Mammary epithelial cell (primary cell): ENCODE measurements at regions of chr3 and their contacts with region 1.

Region 1: DNA sequence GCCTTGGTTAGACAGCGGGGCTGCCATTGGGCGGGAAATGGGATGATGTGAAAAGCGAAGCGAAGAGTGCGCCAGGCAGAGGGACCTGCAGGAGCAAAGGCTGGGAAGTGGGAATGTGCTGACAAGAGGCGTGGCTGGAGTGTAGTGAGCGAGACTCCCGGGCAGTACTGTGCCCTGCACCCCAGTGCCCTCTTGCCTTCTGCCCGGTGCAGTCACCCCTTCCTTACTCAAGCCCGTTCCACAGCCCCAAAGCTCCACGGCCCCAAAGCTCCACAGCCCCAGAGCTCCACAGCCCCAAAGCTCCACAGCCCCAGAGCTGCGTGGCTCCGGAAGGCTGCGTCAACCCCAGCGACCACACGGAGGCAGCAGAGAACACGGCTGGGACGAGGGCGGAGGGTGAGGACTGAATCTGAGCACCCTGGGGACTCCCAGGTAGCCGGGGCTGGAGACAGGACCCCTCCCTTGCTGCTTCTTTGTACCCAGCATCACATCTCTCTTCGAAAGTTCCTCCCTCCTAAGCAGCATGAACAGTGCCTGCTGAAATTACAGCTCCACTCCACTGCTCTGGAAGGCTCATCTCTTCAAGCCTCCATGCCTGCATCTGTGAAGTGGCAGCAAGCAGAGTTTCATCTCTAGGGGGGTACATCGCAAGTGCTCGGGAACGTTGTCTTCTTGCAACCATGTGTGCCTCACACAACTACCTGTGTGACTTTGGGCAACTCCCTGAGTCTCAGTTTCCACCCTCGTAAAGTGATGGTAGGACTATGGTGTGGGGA is 108.9 kb downstream of the FBLN2 start:
- DNase-seq: peak; percentile 37
- H3K4me3 ChIP-seq: no peak overlapping the region
- H3K27ac ChIP-seq: no peak overlapping the region
- H3K4me1 ChIP-seq: peaks cover 11% of the 10 kb centered on the region
- H3K27me3 ChIP-seq: no peaks in the 10 kb centered on the region
- CTCF ChIP-seq: peak; percentile 85 to 98

Region 2: DNA sequence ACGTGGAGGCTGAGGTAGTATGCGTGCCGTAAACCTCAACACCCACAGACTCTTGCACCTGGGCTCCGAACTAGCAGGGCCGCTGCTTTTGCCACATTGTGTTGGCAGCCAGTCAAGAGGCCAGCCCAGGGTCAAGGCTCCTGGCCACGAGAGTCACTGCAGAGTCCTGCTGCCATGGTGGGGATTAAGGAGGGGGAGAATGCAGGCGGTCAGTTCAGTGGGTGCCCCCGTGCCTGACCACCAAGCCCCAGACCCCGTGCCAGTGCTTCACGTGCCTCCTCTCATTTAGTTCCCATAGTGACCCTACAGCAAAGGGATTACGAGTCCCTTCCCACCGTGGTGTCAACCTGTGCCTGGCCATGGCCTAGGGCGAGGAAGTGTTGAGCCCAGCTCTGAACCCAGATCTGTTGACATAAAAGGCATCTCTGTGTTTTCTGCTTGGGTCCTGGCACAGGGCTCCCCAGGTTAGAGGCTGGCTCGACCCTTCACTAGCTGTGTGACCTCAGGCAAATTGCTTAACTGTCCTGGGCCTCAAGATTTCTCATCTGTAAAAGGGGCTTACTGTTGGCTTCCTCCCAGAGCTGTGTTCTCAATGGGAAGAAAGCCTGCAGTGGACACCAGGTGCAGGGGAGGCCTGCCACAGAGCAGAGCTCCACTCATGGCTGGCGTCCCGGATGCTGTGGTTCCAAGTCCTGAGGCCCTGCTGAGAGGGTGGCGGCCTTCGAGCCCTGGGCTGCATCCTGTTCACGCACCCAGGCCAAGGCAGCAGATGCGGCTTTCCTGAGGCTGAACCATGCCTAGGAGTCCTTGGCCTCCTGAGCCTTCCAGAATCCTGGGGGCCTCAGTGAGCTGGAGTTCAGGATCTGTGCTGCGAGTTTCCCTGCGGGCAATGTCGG is 76.1 kb before region 1 on chr3:
- CTCF ChIA-PET with region 1: no interaction called
- dilution Hi-C with region 1: loop called (anchors 5 kb)
- in situ Hi-C with region 1: no loop called
- intact Hi-C with region 1: no loop called
- DNase-seq: no peak
- H3K4me3 ChIP-seq: no peak overlapping the region
- H3K27ac ChIP-seq: no peak overlapping the region
- H3K4me1 ChIP-seq: no peaks in the 10 kb centered on the region
- H3K27me3 ChIP-seq: no peaks in the 10 kb centered on the region
- CTCF ChIP-seq: no peak

Region 3: DNA sequence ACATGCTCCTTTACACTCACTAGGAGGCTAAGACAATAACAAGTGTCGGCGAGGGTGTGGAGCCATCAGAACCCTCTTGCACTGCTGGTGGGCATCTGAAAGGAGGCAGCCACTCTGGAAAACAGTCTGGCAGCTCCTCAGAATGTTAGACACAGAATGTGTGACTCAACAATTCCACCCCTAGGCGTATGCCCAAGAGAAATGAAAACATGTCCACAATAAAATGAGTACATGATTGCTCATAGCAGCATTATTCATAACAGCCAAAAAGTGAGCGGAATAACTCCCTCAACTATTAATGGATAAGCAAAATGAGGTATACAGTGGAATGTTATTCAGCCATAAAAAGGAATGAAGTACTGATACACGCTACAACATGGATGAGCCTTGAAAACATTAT is 164.2 kb after region 1 on chr3:
- CTCF ChIA-PET with region 1: no interaction called
- dilution Hi-C with region 1: no loop called
- in situ Hi-C with region 1: no loop called
- intact Hi-C with region 1: loop called (anchors 5 kb)
- DNase-seq: peak; percentile 94
- H3K4me3 ChIP-seq: no peak overlapping the region
- H3K27ac ChIP-seq: peak overlapping the region; percentile 30
- H3K4me1 ChIP-seq: peaks cover 39% of the 10 kb centered on the region
- H3K27me3 ChIP-seq: no peaks in the 10 kb centered on the region
- CTCF ChIP-seq: no peak

Region 4: GRCh38 chr3:13836741-13837480 is 179.1 kb after region 1 on chr3:
- CTCF ChIA-PET with region 1: interaction called, 3 read pairs
- dilution Hi-C with region 1: no loop called
- in situ Hi-C with region 1: no loop called
- intact Hi-C with region 1: loop called (anchors 1 kb)
- DNase-seq: peak; percentile 57
- H3K4me3 ChIP-seq: no peak overlapping the region
- H3K27ac ChIP-seq: no peak overlapping the region
- H3K4me1 ChIP-seq: peaks cover 47% of the 10 kb centered on the region
- H3K27me3 ChIP-seq: no peaks in the 10 kb centered on the region
- CTCF ChIP-seq: peak; percentile 18 to 64